ENCODE measurements at regions of chr2 and their contacts with region 1.

Region 1: GRCh38 chr2:27705851-27706622 is 42.3 kb downstream of the SLC4A1AP start:
- DNase-seq: peak; percentile 81 to 91
- H3K4me3 ChIP-seq: no peak overlapping the region
- CTCF ChIP-seq: no peak
- POLR2A ChIP-seq: no peak

Region 2: GRCh38 chr2:27494944-27495554 is 211.0 kb before region 1 on chr2 and contains the start of gene FNDC4:
- intact Hi-C with region 1: no loop called
- DNase-seq: peak in 1 of 2 donors; percentile 83
- H3K4me3 ChIP-seq: peak within 1 kb of the TSS; percentile 51
- CTCF ChIP-seq: no peak
- POLR2A ChIP-seq: no peak
- total RNA-seq, gene FNDC4: 2.6 to 9.1 (median 5.0) TPM

Region 3: DNA sequence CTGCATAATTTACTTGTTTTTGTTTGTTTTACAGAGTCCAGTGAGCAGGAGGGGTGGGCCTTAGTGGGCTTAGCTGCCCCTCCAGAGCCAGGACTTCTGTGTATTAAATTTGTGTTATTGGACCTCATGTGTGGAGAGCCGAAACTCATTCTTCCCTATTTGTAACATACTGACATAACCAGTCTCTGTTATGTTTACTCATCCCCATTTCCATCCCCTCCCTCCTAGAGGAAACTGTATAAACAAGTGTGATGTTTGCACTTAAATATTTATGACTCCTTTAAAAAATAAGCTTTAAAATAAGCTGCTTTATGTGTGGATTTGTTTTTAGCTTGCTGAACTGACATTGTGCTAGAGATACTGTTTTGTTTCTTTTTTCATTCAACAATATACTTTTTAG is 109.4 kb before region 1 on chr2:
- intact Hi-C with region 1: no loop called
- DNase-seq: no peak
- H3K4me3 ChIP-seq: no peak overlapping the region
- CTCF ChIP-seq: no peak
- POLR2A ChIP-seq: no peak

Region 4: DNA sequence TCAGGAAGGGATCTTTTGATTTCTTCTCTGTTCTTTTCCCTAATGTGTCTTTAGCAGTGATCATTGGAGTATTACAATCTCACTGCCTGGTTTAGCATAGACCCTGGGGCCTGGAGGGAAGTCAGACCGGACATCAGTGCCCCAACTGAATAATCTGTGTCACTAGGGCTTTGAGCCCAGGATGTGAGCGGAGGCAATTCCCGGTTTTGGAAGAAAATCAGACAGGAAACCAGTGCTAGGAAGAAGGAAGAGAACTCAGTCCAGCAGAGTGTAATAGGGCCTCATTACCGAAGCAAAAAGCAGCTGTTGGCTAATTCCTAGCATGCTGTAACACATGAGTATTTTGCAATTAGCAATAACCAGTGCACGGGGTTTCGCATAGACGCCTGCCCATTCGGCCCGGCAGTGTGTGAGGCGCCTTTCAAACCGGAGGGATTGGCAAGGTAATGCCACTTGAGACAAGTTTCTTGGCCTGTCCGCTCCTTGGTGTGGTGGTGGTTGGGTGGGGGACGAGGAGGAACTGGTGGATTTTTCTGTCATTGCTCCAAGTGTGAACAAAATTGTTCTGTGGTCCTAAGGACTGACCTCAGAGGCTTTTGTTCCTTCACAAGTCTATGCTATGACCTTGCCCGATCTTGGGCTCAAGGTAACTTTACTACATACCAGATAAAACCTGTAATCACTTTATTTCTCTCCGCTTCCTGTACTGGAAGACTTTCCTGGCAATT is 689.5 kb after region 1 on chr2:
- intact Hi-C with region 1: loop called (anchors 5 kb)
- DNase-seq: peak; percentile 86 to 94
- H3K4me3 ChIP-seq: peak overlapping the region; percentile 97
- CTCF ChIP-seq: no peak
- POLR2A ChIP-seq: no peak